ENCODE measurements at regions of chr17 and their contacts with region 1.

Region 1: GRCh38 chr17:39401412-39402243 is at the start of gene FBXL20:
- DNase-seq: peak; percentile 80 to 92 (median 90)
- H3K4me3 ChIP-seq: peak within 1 kb of the TSS; percentile 67 to 100 (median 97)
- H3K27ac ChIP-seq: peak within 1 kb of the TSS; percentile 44 to 98 (median 95)
- H3K27me3 ChIP-seq: no peaks in the 10 kb centered on the region
- CTCF ChIP-seq: peak in 17 of 56 donors; percentile 7 to 35 (median 19)
- total RNA-seq, gene FBXL20: 31.2 to 70.6 (median 49.0) TPM

Region 2: GRCh38 chr17:39364626-39365025 is 37.0 kb before region 1 on chr17:
- intact Hi-C with region 1: loop called in 1 of 2 experiments (anchors 5 kb)
- DNase-seq: no peak
- H3K4me3 ChIP-seq: no peak overlapping the region
- H3K27ac ChIP-seq: no peak overlapping the region
- H3K27me3 ChIP-seq: no peaks in the 10 kb centered on the region
- CTCF ChIP-seq: no peak

Region 3: DNA sequence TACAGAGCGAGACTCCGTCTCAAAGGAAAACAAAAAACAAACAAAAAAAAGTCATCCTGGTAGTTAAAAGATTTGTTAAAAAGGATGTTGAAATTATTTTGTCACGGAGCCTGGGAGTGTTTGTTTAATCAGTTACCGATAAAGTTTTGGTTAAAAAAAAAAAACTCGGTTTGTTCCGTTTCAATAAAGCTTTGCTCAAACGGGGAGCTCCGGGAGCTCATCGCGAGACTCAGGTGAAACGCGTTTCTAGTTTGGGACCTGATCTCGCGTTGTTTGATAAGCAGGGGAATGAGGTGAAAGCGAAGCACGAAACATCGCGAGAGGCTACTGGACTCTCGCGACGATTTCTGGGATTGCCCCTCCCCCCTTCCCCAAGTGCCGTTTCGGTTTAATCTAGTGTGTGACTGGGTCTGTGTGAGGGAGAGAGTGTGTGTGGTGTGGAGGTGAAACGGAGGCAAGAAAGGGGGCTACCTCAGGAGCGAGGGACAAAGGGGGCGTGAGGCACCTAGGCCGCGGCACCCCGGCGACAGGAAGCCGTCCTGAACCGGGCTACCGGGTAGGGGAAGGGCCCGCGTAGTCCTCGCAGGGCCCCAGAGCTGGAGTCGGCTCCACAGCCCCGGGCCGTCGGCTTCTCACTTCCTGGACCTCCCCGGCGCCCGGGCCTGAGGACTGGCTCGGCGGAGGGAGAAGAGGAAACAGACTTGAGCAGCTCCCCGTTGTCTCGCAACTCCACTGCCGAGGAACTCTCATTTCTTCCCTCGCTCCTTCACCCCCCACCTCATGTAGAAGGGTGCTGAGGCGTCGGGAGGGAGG is 59.7 kb after region 1 on chr17 and contains the start of gene CDK12:
- intact Hi-C with region 1: loop called in 1 of 2 experiments (anchors 5 kb)
- DNase-seq: peak; percentile 90 to 99 (median 95)
- H3K4me3 ChIP-seq: peak within 1 kb of the TSS; percentile 61 to 99 (median 91)
- H3K27ac ChIP-seq: peak within 1 kb of the TSS; percentile 79 to 99 (median 95)
- H3K27me3 ChIP-seq: no peaks in the 10 kb centered on the region
- CTCF ChIP-seq: peak in 16 of 56 donors; percentile 7 to 50 (median 20)
- total RNA-seq, gene CDK12: 39.8 to 91.0 (median 63.5) TPM

Region 4: GRCh38 chr17:39553341-39553945 is 151.8 kb after region 1 on chr17:
- intact Hi-C with region 1: no loop called
- DNase-seq: peak in 1 of 10 donors; percentile 51
- H3K4me3 ChIP-seq: no peak overlapping the region
- H3K27ac ChIP-seq: peak overlapping the region in 23 of 59 donors; percentile 2 to 75 (median 32)
- H3K27me3 ChIP-seq: no peaks in the 10 kb centered on the region
- CTCF ChIP-seq: no peak